ENCODE measurements at regions of chr12 and their contacts with region 1.

Region 1: GRCh38 chr12:54182086-54182485 is 6.7 kb downstream of the SMUG1 start:
- DNase-seq: no peak
- ATAC-seq: peak in 1 of 4 donors; percentile 4
- H3K4me3 ChIP-seq: no peak overlapping the region
- H3K27ac ChIP-seq: no peak overlapping the region
- H3K4me1 ChIP-seq: no peaks in the 10 kb centered on the region
- H3K27me3 ChIP-seq: peaks cover 0 to 1% (median 0%) of the 10 kb centered on the region in 3 donors
- CTCF ChIP-seq: no peak

Region 2: GRCh38 chr12:53961025-53961761 is 220.9 kb before region 1 on chr12:
- intact Hi-C with region 1: no loop called
- DNase-seq: peak in 1 of 2 donors; percentile 54
- ATAC-seq: peak in 2 of 4 donors; percentile 25 to 43
- H3K4me3 ChIP-seq: no peak overlapping the region
- H3K27ac ChIP-seq: no peak overlapping the region
- H3K4me1 ChIP-seq: peaks cover 4% of the 10 kb centered on the region
- H3K27me3 ChIP-seq: peaks cover 0 to 98% (median 30%) of the 10 kb centered on the region in 3 donors
- CTCF ChIP-seq: no peak

Region 3: DNA sequence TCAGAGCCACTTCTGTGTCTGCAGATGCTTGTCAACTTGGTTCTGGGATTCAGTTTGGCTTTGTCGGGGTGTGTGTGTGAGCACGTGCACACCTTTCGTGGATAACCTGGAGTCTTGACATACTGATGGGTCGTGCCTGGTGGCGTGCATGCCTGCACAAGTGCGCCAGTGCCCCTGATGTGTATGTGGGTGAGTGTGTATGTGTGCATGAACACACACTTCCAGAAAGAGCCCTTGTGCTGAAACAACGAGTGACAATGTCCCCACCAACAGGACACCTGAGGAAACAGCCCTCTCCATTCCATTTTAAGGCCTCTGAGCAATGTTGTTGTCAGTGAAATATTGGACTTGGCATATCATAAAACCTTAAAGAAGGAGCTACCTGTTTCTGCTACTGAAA is 47.2 kb before region 1 on chr12:
- intact Hi-C with region 1: loop called in 1 of 2 experiments (anchors 5 kb)
- DNase-seq: no peak
- ATAC-seq: peak in 1 of 4 donors; percentile 35
- H3K4me3 ChIP-seq: no peak overlapping the region
- H3K27ac ChIP-seq: no peak overlapping the region
- H3K4me1 ChIP-seq: no peaks in the 10 kb centered on the region
- H3K27me3 ChIP-seq: peaks cover 0 to 3% (median 0%) of the 10 kb centered on the region in 3 donors
- CTCF ChIP-seq: no peak